Activated CD4-positive, alpha-beta memory T cell treated with anti-CD3 and anti-CD28 coated beads, Interleukin-2, amount 10 ng/mL, durations not matched to agents 7 days and 5 days (primary cell): ENCODE measurements at regions of chr6 and their contacts with region 1.

Region 1: DNA sequence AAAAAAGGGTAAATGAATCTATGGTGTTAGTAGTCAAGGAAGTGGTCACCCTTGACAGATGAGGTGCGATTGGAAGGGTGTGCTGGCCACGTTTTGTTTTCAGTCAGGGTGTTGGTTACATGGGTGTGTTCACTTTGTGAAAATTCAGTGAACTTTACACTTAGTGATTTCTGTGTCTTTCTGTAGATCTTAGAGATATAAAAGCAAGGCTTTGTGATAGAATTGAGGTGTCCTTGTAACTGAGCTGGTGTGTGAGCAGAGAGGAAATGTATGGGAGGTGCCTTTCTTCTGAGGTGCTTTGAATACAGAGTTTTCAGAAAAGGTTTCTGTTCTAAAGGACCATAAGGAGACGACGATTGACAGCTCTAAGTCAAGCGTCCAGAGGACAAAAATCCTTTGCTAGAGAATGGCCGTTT is 90.5 kb downstream of the SAMD3 start:
- DNase-seq: peak; percentile 86
- H3K4me3 Mint-ChIP-seq: peak overlapping the region; percentile 54
- H3K27ac Mint-ChIP-seq: peak overlapping the region; percentile 90
- H3K4me1 Mint-ChIP-seq: peaks cover 67% of the 10 kb centered on the region
- H3K27me3 Mint-ChIP-seq: no peaks in the 10 kb centered on the region

Region 2: DNA sequence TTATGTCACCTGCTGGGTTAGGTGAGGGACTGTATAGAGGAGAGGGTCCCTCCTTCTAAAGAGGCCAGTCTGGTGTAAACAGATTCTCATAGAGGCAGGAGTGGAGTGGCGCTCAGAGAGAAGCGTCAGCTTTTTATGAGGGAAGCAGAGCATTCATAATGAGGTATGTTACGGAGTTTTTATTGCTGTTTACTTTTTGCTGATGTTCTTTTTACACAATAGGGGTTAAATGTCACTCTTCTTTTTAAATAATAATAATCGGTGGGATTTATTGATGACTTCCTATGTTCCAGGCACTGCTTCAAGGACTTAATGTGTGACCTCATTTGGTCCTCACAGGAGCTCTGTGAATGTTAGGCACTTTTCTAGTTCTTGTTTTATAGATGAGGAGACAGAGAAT is 34.0 kb before region 1 on chr6:
- CTCF ChIA-PET with region 1: no interaction called
- POLR2A ChIA-PET with region 1: no interaction called
- DNase-seq: no peak
- H3K4me3 Mint-ChIP-seq: no peak overlapping the region
- H3K27ac Mint-ChIP-seq: no peak overlapping the region
- H3K4me1 Mint-ChIP-seq: peaks cover 12% of the 10 kb centered on the region
- H3K27me3 Mint-ChIP-seq: no peaks in the 10 kb centered on the region

Region 3: GRCh38 chr6:130148181-130148580 is 15.9 kb after region 1 on chr6:
- CTCF ChIA-PET with region 1: no interaction called
- POLR2A ChIA-PET with region 1: no interaction called
- DNase-seq: no peak
- H3K4me3 Mint-ChIP-seq: no peak overlapping the region
- H3K27ac Mint-ChIP-seq: no peak overlapping the region
- H3K4me1 Mint-ChIP-seq: peaks cover 4% of the 10 kb centered on the region
- H3K27me3 Mint-ChIP-seq: no peaks in the 10 kb centered on the region

Region 4: DNA sequence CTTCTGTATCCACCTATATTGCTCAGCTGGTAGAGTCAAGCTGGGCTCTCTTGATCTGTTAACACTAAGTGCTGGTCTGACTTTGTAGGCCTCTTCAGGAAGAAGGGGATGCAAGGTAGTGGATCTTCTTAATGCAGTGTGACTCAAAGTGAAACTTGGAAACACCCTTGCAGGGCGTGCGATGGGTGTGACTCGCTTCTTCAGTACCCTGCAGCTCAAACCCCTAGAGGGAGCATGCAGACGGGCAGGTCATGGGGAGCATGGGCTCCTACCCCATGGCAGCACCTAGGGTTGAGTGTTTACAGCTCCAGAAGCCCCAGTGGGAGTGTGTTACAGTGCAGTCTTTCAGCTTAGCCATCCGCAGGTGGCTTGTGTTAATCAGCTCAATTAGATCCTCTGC is 91.2 kb after region 1 on chr6:
- CTCF ChIA-PET with region 1: interaction called, 13 read pairs
- POLR2A ChIA-PET with region 1: interaction called, 32 read pairs
- DNase-seq: peak; percentile 86
- H3K4me3 Mint-ChIP-seq: peak overlapping the region; percentile 26
- H3K27ac Mint-ChIP-seq: peak overlapping the region; percentile 98
- H3K4me1 Mint-ChIP-seq: peaks cover 39% of the 10 kb centered on the region
- H3K27me3 Mint-ChIP-seq: no peaks in the 10 kb centered on the region